ENCODE measurements at regions of chr3 and their contacts with region 1.

Region 1: DNA sequence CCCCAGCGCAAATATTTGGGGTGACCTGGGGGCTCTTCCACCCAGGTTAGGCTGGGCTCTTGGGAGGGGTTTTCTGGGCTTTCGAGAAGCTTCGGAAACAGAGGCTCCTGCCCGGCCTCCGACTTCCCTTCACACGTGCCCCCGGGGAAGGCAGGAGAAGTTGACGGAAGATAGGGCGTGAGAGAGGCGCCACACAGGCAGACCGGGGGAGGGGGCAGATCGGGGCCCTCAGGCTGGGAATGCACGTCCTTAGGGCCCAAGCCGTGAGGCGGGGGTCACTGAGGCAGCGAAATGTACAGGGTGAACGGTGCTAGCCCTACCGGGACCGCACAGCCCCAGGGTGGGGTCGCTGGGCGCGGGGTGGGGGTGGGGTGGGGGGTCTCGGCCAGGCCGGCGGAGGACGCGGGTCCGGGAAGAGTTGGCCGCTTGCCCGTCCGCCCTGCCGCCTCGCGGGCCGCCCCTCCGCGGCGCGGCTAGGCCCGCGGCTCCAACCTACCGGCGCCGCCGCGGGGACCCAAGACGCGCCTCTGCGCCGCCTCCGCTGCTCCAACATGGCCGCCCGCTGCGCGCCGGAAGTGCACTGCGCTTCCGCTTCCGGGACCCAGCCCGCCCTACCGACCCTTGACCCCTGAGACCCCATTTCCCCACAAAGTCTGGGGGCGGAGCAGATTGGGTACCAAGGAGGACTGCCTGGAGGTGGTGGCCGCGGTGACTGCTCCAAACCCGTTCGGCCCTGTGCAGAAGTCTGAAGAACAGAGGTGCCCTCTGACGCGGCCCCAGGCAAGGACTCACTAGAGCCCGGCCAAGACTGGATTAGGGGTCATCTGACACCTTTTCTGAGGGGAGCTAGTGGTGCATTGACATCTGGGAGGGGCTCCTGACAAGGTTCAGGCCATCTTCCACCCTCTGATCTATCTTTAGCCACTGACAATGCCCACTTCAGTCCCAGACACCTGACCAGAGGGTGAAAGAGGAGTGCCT is at the start of gene CCDC71:
- DNase-seq: peak; percentile 70 to 89 (median 81)
- H3K4me3 ChIP-seq: peak within 1 kb of the TSS; percentile 77
- H3K27ac ChIP-seq: peak within 1 kb of the TSS; percentile 88 to 89
- H3K4me1 ChIP-seq: no peaks in the 10 kb centered on the region
- H3K27me3 ChIP-seq: no peaks in the 10 kb centered on the region
- CTCF ChIP-seq: no peak
- EP300 ChIP-seq: no peak
- POLR2A ChIP-seq: peak; percentile 70
- total RNA-seq, gene CCDC71: 24.8 to 39.0 (median 32.7) TPM

Region 2: DNA sequence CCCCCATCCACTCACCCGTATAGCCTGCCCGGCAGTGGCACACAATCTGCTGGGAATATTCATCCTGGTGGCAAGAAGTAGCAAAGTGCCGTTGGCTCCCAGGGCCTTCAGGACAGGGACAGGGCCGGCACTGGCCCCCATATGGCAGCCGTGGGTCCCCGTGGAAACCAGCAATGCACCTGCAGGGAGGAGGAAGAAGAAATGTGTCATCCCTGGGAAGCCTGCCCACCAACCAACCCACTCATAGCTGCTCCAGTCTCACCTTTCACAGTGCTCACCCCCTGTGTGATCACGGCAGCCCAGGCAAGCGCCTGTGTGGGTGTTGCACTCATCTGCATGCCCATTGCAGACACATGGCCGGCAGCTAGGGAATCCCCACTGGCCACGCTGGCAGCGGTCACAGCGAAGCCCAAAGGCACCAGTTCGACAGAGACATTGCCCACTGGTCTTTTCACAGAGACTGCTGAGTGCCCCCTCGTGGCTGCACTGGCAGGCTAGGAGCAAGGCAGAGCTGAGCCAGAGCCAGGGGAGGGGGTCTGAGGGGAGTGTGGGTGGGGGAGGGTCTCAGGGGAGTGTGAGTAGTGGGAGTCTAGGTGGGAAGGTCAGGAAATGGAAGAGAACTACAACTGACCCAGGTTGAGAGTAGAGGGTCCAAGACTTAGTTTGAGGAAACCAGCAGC is 40.9 kb before region 1 on chr3:
- intact Hi-C with region 1: loop called in 1 of 4 experiments (anchors 5 kb)
- DNase-seq: no peak
- H3K4me3 ChIP-seq: no peak overlapping the region
- H3K27ac ChIP-seq: no peak overlapping the region
- H3K4me1 ChIP-seq: no peaks in the 10 kb centered on the region
- H3K27me3 ChIP-seq: no peaks in the 10 kb centered on the region
- CTCF ChIP-seq: no peak
- EP300 ChIP-seq: no peak
- POLR2A ChIP-seq: no peak